Gastrocnemius medialis (tissue), 4 donors: ENCODE measurements at regions of chr19 and their contacts with region 1.

Region 1: GRCh38 chr19:39532233-39533002 is at the start of gene EID2B:
- DNase-seq: peak; percentile 91 to 92
- ATAC-seq: peak; percentile 100
- H3K4me3 ChIP-seq: peak within 1 kb of the TSS; percentile 74 to 90 (median 84)
- H3K27ac ChIP-seq: peak within 1 kb of the TSS; percentile 74 to 86 (median 83)
- H3K4me1 ChIP-seq: peaks cover 11 to 17% of the 10 kb centered on the region in 2 donors
- H3K27me3 ChIP-seq: no peaks in the 10 kb centered on the region
- CTCF ChIP-seq: peak; percentile 98 to 99 (median 99)
- POLR2A ChIP-seq: peak; percentile 41 to 48
- total RNA-seq, gene EID2B: 0.91 to 6.5 (median 1.2) TPM

Region 2: GRCh38 chr19:39110263-39110967 is 422.0 kb before region 1 on chr19:
- in situ Hi-C with region 1: loop called in 2 of 4 experiments (anchors 25 kb)
- intact Hi-C with region 1: no loop called
- DNase-seq: peak in 1 of 2 donors; percentile 46
- ATAC-seq: peak; percentile 77
- H3K4me3 ChIP-seq: no peak overlapping the region
- H3K27ac ChIP-seq: no peak overlapping the region
- H3K4me1 ChIP-seq: no peaks in the 10 kb centered on the region
- H3K27me3 ChIP-seq: peaks cover 14 to 20% (median 18%) of the 10 kb centered on the region in 3 donors
- CTCF ChIP-seq: peak; percentile 41 to 76 (median 71)
- POLR2A ChIP-seq: no peak

Region 3: GRCh38 chr19:39307046-39307823 is 225.2 kb before region 1 on chr19:
- in situ Hi-C with region 1: no loop called
- intact Hi-C with region 1: no loop called
- DNase-seq: no peak
- ATAC-seq: no peak
- H3K4me3 ChIP-seq: peak overlapping the region in 1 of 4 donors; percentile 17
- H3K27ac ChIP-seq: no peak overlapping the region
- H3K4me1 ChIP-seq: no peaks in the 10 kb centered on the region
- H3K27me3 ChIP-seq: peaks cover 42 to 66% (median 63%) of the 10 kb centered on the region in 3 donors
- CTCF ChIP-seq: no peak
- POLR2A ChIP-seq: no peak

Region 4: GRCh38 chr19:39341719-39342604 is 190.5 kb before region 1 on chr19 and contains the start of gene SAMD4B:
- in situ Hi-C with region 1: loop called in 3 of 4 experiments (anchors 10 to 25 kb)
- intact Hi-C with region 1: loop called (anchors 5 kb)
- DNase-seq: peak; percentile 98
- ATAC-seq: peak; percentile 91
- H3K4me3 ChIP-seq: peak within 1 kb of the TSS; percentile 84 to 91 (median 86)
- H3K27ac ChIP-seq: peak within 1 kb of the TSS; percentile 84 to 92 (median 89)
- H3K4me1 ChIP-seq: peaks cover 38 to 55% of the 10 kb centered on the region in 2 donors
- H3K27me3 ChIP-seq: no peaks in the 10 kb centered on the region
- CTCF ChIP-seq: peak; percentile 73 to 88 (median 83)
- POLR2A ChIP-seq: peak; percentile 89 to 97
- total RNA-seq, gene SAMD4B: 30.9 to 63.7 (median 59.2) TPM

Region 5: GRCh38 chr19:39435499-39436349 is 96.7 kb before region 1 on chr19 and contains the start of gene RPS16:
- in situ Hi-C with region 1: loop called in 2 of 4 experiments (anchors 5 to 25 kb)
- intact Hi-C with region 1: loop called (anchors 2 kb)
- DNase-seq: peak; percentile 98 to 99
- ATAC-seq: peak; percentile 96
- H3K4me3 ChIP-seq: peak within 1 kb of the TSS; percentile 77 to 99 (median 91)
- H3K27ac ChIP-seq: peak within 1 kb of the TSS; percentile 86 to 95 (median 90)
- H3K4me1 ChIP-seq: peaks cover 22 to 28% of the 10 kb centered on the region in 2 donors
- H3K27me3 ChIP-seq: no peaks in the 10 kb centered on the region
- CTCF ChIP-seq: peak in 1 of 5 experiments; percentile 19
- POLR2A ChIP-seq: peak; percentile 98 to 99
- total RNA-seq, gene RPS16: 1,066 to 1,636 (median 1,467) TPM

Region 6: GRCh38 chr19:39474139-39474622 is 58.2 kb before region 1 on chr19:
- in situ Hi-C with region 1: loop called in 1 of 4 experiments (anchors 5 kb)
- intact Hi-C with region 1: loop called (anchors 1 kb)
- DNase-seq: peak in 1 of 2 donors; percentile 33
- ATAC-seq: peak in 1 of 2 donors; percentile 68
- H3K4me3 ChIP-seq: no peak overlapping the region
- H3K27ac ChIP-seq: peak overlapping the region in 1 of 4 donors; percentile 12
- H3K4me1 ChIP-seq: no peaks in the 10 kb centered on the region
- H3K27me3 ChIP-seq: no peaks in the 10 kb centered on the region
- CTCF ChIP-seq: peak; percentile 52 to 87 (median 78)
- POLR2A ChIP-seq: no peak

Region 7: GRCh38 chr19:39599116-39599515 is 66.7 kb after region 1 on chr19:
- in situ Hi-C with region 1: no loop called
- intact Hi-C with region 1: no loop called
- DNase-seq: no peak
- ATAC-seq: no peak
- H3K4me3 ChIP-seq: no peak overlapping the region
- H3K27ac ChIP-seq: no peak overlapping the region
- H3K4me1 ChIP-seq: no peaks in the 10 kb centered on the region
- H3K27me3 ChIP-seq: peaks cover 0 to 6% (median 2%) of the 10 kb centered on the region in 3 donors
- CTCF ChIP-seq: no peak
- POLR2A ChIP-seq: no peak

Region 8: GRCh38 chr19:39679056-39679790 is 146.8 kb after region 1 on chr19:
- in situ Hi-C with region 1: no loop called
- intact Hi-C with region 1: loop called (anchors 5 kb)
- DNase-seq: peak; percentile 55 to 75
- ATAC-seq: peak; percentile 86 to 89
- H3K4me3 ChIP-seq: peak overlapping the region; percentile 19 to 36 (median 26)
- H3K27ac ChIP-seq: peak overlapping the region; percentile 85 to 95 (median 92)
- H3K4me1 ChIP-seq: peaks cover 19 to 30% of the 10 kb centered on the region in 2 donors
- H3K27me3 ChIP-seq: no peaks in the 10 kb centered on the region
- CTCF ChIP-seq: no peak
- POLR2A ChIP-seq: peak in 1 of 2 donors; percentile 50